CD4-positive, alpha-beta memory T cell (primary cell): ENCODE measurements at regions of chr14 and their contacts with region 1.

Region 1: GRCh38 chr14:57199921-57200320 is 68.8 kb downstream of the EXOC5 start:
- DNase-seq: no peak
- H3K4me3 ChIP-seq: no peak overlapping the region
- H3K4me3 Mint-ChIP-seq: no peak overlapping the region
- H3K27ac ChIP-seq: no peak overlapping the region
- H3K27ac Mint-ChIP-seq: no peak overlapping the region
- H3K4me1 ChIP-seq: no peaks in the 10 kb centered on the region
- H3K4me1 Mint-ChIP-seq: no peaks in the 10 kb centered on the region
- H3K27me3 ChIP-seq: no peaks in the 10 kb centered on the region
- H3K27me3 Mint-ChIP-seq: peaks cover 0 to 6% of the 10 kb centered on the region in 2 donors

Region 2: GRCh38 chr14:56555921-56556570 is 643.9 kb before region 1 on chr14:
- CTCF ChIA-PET with region 1: no interaction called
- POLR2A ChIA-PET with region 1: no interaction called
- intact Hi-C with region 1: loop called (anchors 10 kb)
- DNase-seq: no peak
- H3K4me3 ChIP-seq: no peak overlapping the region
- H3K4me3 Mint-ChIP-seq: no peak overlapping the region
- H3K27ac ChIP-seq: no peak overlapping the region
- H3K27ac Mint-ChIP-seq: no peak overlapping the region
- H3K4me1 ChIP-seq: no peaks in the 10 kb centered on the region
- H3K4me1 Mint-ChIP-seq: no peaks in the 10 kb centered on the region
- H3K27me3 ChIP-seq: no peaks in the 10 kb centered on the region
- H3K27me3 Mint-ChIP-seq: peaks cover 15 to 31% of the 10 kb centered on the region in 2 donors

Region 3: DNA sequence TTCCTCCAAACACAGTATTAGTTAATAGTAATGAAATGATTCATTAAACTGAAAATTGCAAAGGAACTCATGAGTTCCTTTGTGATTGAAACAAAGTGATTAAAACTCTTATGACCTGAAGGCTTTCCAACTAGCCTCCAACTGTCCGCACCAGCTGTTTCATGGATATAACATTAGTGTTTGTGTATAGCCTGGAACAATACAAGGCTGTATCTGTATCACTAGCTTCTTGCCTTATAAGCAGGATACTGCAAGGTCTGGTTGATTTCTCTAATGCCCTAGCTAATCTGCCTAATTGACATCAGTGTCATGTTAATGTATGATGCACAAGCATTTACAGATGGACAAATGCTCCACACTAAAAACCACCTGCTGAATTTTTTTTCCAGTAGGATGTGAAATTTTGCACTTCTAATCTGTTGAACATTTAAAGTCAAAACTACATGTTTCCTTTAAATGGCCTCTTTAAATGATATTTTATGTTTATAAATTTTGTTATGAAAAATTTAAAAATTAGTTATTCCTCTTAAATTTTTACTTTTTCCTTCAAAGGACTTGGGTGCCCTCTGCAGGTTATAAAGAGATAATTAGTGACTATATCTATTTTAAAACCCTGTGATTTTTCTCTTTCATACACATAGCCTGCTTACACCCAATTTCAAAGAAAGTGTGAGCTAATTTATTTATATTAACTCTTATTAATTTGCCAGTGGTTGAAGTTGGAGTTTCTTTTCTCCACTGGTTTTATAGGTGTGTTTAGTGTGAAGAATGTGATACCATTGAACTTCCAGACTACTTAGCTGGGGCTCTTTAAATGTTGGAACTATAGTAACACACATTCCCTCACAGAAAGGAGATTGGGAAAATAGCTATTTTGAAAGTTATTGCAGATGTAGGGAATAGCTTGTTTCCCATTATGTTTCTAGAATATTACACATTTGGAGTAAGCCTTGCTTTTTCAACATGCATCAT is 94.2 kb after region 1 on chr14:
- CTCF ChIA-PET with region 1: no interaction called
- POLR2A ChIA-PET with region 1: no interaction called
- intact Hi-C with region 1: loop called (anchors 10 kb)
- DNase-seq: peak in 1 of 5 donors; percentile 4
- H3K4me3 ChIP-seq: no peak overlapping the region
- H3K4me3 Mint-ChIP-seq: no peak overlapping the region
- H3K27ac ChIP-seq: no peak overlapping the region
- H3K27ac Mint-ChIP-seq: no peak overlapping the region
- H3K4me1 ChIP-seq: no peaks in the 10 kb centered on the region
- H3K4me1 Mint-ChIP-seq: no peaks in the 10 kb centered on the region
- H3K27me3 ChIP-seq: no peaks in the 10 kb centered on the region
- H3K27me3 Mint-ChIP-seq: no peaks in the 10 kb centered on the region